Right ventricle myocardium superior (tissue), 1 donor: ENCODE measurements at regions of chr4 and their contacts with region 1.

Region 1: DNA sequence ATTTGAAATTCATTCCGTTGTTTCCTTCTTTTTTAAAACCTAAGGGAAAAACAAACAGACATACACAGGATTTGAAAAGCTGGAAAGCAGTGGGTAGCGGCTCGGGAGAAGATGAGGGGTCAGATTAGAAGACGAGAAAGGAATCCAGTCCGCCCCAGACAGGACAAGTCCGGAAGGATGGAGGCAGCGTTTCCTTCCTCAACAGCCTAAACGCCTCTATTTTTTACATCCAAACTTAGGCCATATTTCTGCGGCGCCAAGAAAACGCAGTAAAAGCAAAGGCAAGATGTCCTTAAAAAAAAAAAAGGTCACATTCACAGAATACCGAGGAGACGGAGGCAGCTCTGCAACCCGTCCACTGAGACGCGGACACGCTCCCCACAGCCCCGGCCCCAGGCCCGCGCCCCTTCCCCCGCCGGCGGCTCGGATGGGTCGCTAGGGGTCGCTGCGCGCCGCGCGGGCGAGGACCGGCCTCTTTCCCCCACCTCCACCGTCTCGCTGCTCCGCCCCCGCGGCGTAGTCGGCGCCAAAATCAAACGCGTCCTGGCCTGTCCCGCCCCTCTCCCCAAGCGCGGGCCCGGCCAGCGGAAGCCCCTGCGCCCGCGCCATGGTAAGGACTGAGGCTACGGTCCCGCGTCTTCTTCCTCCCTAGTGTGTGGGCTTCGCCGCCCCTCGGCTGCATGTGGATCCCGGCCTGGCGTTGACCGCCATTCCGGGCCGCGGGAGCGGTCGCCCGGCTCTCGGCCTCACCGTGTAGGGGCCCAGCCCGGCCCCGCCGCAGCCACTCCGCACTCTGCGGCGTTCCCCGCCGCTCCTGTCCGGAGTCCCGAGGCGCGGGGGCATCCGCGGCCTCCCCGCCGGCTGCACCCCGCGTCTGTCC is at the start of gene MND1:
- DNase-seq: peak; percentile 91
- ATAC-seq: peak; percentile 98
- total RNA-seq, gene MND1: 0.38 TPM

Region 2: GRCh38 chr4:153292897-153293741 is 51.3 kb before region 1 on chr4:
- intact Hi-C with region 1: no loop called
- DNase-seq: no peak
- ATAC-seq: no peak

Region 3: DNA sequence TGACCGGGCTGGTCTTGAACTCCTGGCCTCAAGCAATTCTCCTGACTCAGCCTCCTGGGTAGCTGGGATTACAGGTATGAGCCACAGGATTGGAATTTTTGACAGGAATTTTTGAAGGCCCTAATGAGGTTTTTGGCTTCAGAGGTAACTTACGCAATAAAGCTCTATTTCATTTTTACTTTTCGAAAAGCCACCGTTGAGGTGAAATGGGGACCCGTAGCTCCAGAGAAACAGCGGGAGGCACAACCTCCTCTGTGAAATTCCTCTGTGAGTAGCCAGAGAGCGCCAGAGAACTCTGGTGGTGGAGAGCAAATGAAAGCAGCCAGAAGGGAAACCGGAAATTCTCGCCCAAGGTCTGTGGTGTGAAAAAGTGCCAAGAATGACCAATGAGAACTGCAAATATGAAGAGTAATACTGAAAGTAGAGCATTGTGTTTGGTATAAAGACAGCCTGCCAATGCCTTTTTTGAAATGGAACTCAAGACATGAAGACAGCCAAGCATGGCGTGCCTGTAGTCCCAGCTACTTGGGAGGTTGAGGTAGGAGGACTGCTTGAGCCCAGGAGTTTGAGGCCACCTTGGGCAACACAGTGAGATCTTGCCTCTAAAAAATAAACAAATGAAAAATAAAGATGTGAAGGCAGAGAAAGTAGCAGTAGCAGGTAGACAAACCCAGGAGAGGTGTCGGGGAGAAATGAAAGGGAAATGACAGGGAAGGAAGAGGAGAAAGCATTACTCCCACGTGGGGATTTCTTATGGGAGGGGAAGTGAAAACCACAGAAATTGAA is 88.8 kb after region 1 on chr4:
- intact Hi-C with region 1: loop called (anchors 10 kb)
- DNase-seq: peak; percentile 47
- ATAC-seq: peak; percentile 92

Region 4: DNA sequence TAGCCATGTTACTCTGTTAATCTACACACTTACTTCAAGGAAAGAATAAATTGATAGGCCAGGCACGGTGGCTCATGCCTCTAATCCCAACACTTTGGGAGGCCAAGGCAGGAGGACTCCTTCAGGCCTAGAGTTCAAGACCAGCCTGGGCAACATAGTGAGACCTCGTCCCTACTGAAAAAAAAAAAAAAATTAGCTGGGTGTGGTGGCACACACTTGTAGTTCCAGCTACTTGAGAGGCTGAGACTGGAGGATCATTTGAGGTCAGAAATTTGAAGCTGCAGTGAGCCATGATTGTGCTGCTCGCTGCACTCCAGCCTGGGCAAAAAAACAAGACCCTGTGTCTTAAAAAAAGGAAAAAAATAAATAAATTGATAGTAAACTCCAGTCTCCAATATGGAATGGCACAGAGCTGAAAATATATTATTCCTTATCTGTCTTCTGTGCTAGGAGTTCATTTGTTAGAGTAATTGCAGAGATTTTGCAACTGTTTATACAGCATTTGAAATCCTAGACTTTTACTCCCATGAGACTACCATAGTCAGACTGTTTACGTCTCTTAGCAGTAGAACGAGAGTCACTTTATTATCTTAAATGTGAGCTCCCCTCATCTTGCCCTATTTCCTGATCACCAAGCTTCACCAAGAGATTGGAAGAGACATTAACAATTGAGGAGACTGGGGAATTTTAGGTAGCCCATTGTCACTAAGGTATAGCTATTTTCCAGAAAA is 103.0 kb after region 1 on chr4:
- intact Hi-C with region 1: no loop called
- DNase-seq: no peak
- ATAC-seq: peak; percentile 46

Region 5: GRCh38 chr4:153466081-153466948 is 121.9 kb after region 1 on chr4 and contains the start of gene TMEM131L:
- intact Hi-C with region 1: loop called (anchors 10 kb)
- DNase-seq: peak; percentile 85
- ATAC-seq: peak; percentile 89
- total RNA-seq, gene TMEM131L: 13.7 TPM

Region 6: DNA sequence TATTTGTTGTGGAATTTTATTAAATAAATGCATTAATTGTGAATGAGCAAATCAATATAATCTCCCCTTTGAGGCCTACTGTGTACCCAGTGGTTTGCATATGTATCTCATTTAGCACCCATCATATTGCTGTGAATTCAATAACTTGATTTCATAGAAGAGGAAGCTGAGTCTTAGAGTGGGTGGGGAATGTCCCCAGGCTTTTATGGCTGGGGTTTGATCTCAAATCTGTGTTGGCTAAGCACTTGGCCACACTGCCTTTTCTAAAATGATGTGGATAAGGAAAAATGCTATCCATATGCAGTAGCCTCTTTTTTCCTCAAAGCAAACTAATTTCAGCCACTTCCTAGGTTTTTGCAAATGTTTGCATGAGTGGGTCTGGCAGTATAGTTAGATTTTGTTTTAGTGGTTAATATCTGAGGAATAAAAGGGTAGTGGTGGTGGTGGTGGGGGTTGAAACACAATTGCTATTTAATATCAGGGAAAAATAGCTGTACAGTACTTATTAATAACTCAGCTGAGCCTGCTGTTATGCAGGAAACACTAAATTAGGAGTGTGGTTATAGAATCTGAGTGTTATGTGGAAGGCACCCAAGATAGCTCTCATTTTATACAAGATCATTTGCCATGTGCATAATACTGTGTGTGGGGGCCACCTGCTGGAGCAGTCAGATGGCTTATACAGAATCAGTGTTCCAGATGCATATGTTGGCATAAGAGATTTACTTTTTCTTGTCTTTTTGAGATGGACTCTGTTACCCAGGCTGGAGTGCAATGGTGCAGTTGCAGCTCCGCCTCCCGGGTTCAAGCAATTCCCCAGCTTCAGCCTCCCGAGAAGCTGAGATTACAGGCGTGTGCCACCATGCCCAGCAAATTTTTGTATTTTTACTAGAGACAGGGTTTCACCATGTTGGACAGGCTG is 229.8 kb after region 1 on chr4:
- intact Hi-C with region 1: loop called (anchors 5 kb)
- DNase-seq: peak; percentile 81
- ATAC-seq: peak; percentile 90

Region 7: DNA sequence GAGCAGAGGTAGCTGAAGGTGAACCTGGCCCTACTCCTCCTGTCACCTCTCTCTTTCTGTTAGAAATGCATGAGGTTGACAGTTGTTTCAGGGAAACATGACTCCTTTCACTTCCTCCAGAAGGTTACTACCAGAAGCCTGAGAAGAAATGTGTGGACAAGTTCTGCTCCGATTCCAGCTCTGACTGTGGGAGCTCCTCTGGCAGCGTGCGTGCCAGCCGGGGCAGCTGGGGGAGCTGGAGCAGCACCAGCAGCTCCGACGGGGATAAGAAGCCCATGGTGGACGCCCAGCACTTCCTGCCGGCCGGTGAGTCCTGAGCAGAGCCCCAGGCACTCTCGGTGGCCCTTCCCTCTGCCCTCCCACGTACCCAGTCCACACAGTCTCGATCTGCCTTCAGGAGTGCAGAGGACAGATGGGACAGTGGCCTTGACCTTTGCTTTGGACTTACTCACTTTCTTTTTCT is 278.4 kb after region 1 on chr4:
- intact Hi-C with region 1: no loop called
- DNase-seq: no peak
- ATAC-seq: no peak

Region 8: GRCh38 chr4:153651071-153651986 is 307.0 kb after region 1 on chr4:
- intact Hi-C with region 1: no loop called
- DNase-seq: peak; percentile 78
- ATAC-seq: peak; percentile 82

Region 9: GRCh38 chr4:153748380-153748779 is 404.0 kb after region 1 on chr4:
- intact Hi-C with region 1: loop called (anchors 5 kb)
- DNase-seq: no peak
- ATAC-seq: peak; percentile 38